Colonic mucosa (tissue), 4 donors: ENCODE measurements at regions of chr1 and their contacts with region 1.

Region 1: GRCh38 chr1:111222308-111223125 is 5.0 kb upstream of the CHI3L2 start:
- DNase-seq: peak; percentile 83
- H3K4me3 ChIP-seq: no peak overlapping the region
- H3K27ac ChIP-seq: peak overlapping the region; percentile 29
- H3K4me1 ChIP-seq: peaks cover 4% of the 10 kb centered on the region
- H3K27me3 ChIP-seq: no peaks in the 10 kb centered on the region
- CTCF ChIP-seq: peak; percentile 65

Region 2: GRCh38 chr1:111139956-111140679 is 82.4 kb before region 1 on chr1 and contains the starts of genes CEPT1 and DRAM2:
- intact Hi-C with region 1: loop called (anchors 10 kb)
- DNase-seq: peak; percentile 98
- H3K4me3 ChIP-seq: peak within 1 kb of the TSS; percentile 81
- H3K27ac ChIP-seq: peak within 1 kb of the TSS; percentile 90
- H3K4me1 ChIP-seq: no peaks in the 10 kb centered on the region
- H3K27me3 ChIP-seq: no peaks in the 10 kb centered on the region
- CTCF ChIP-seq: no peak
- total RNA-seq, gene CEPT1: 35.7 to 38.7 TPM
- total RNA-seq, gene DRAM2: 35.8 to 88.8 TPM